ENCODE measurements at regions of chr2 and their contacts with region 1.

Region 1: DNA sequence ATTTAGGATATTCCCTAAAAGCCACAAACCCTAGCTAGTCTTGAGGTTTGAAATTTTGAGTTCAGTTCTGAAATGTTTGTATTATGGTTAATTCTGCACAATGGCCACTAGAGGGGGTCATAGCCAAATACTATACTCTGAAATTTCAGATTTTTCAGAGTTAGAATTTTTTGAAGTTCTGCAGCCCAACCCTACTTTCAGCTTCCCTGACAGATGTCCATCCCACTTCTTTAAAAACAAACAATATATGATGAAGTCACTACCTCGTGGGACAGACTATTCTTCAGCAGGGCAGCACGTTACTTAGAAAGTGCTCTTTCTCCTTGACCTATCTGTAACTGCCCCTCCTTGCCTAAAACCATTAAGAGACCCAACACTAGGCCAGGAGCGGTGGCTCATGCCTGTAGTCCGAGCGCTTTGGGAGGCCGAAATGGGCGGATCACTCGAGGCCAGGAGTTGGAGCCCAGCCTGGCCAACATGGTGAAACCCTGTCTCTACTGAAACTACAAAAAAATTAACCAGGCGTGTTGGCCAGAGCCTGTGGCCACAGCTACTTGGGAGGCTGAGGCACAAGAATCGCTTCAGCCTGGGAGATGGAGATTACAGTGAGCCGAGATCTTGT is 48.2 kb upstream of the PAPOLG start:
- DNase-seq: peak in 1 of 2 experiments; percentile 57
- H3K4me3 ChIP-seq: no peak overlapping the region
- H3K27ac ChIP-seq: no peak overlapping the region
- H3K4me1 ChIP-seq: no peaks in the 10 kb centered on the region
- H3K27me3 ChIP-seq: no peaks in the 10 kb centered on the region
- CTCF ChIP-seq: peak in 2 of 3 experiments; percentile 34 to 51; a peak in 2 of 4 replicates
- EP300 ChIP-seq: no peak
- POLR2A ChIP-seq: no peak
- RAD21 ChIP-seq: peak; percentile 65 to 70

Region 2: DNA sequence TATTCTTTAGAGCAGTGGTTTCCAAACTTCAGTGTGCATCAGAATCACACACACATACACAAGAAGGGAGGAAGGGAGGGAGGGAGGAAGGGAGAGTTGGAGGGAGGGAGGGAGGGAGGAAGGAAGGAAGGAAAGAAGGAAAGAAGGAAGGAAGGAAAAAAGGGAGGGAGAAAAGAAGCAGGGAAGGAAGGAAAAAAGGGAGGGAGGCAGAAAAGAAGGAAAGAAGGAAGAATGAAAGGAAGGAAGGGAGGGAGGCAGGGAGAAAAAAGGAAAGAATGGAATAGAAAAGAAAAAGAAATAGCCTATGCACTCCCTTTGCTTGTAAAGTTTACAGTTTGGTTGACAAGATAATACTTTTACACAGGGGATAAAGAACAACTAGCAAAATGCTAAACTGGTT is 58.1 kb before region 1 on chr2:
- CTCF ChIA-PET with region 1: no interaction called
- POLR2A ChIA-PET with region 1: no interaction called
- DNase-seq: no peak
- H3K4me3 ChIP-seq: no peak overlapping the region
- H3K27ac ChIP-seq: no peak overlapping the region
- H3K4me1 ChIP-seq: no peaks in the 10 kb centered on the region
- H3K27me3 ChIP-seq: no peaks in the 10 kb centered on the region; a peak in 1 of 7 replicates
- CTCF ChIP-seq: no peak
- EP300 ChIP-seq: no peak
- POLR2A ChIP-seq: no peak
- RAD21 ChIP-seq: no peak

Region 3: GRCh38 chr2:60693551-60693950 is 14.3 kb before region 1 on chr2:
- CTCF ChIA-PET with region 1: interaction called, 11 read pairs
- POLR2A ChIA-PET with region 1: no interaction called
- DNase-seq: no peak
- H3K4me3 ChIP-seq: no peak overlapping the region
- H3K27ac ChIP-seq: no peak overlapping the region
- H3K4me1 ChIP-seq: no peaks in the 10 kb centered on the region
- H3K27me3 ChIP-seq: no peaks in the 10 kb centered on the region
- CTCF ChIP-seq: no peak
- EP300 ChIP-seq: no peak
- POLR2A ChIP-seq: no peak
- RAD21 ChIP-seq: no peak

Region 4: DNA sequence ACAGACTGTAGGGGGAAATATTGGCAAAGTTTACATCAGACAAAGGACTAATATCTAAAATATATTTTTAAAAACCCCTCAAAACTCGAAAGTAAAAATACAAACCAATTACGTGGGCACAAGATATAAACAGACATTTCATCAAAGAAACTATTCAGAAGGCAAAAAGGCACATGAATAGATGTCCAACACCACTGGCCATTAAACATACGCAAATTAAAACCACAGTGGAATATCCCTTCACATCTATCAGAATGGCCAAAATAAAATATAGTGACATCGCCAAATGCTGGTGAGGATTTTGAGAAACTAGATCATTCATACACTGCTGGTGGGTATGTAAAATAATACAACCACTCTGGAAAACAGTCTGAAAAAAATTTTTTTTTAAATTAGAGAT is 17.6 kb after region 1 on chr2:
- CTCF ChIA-PET with region 1: interaction called, 12 read pairs
- POLR2A ChIA-PET with region 1: no interaction called
- DNase-seq: no peak
- H3K4me3 ChIP-seq: no peak overlapping the region
- H3K27ac ChIP-seq: no peak overlapping the region
- H3K4me1 ChIP-seq: no peaks in the 10 kb centered on the region
- H3K27me3 ChIP-seq: no peaks in the 10 kb centered on the region
- CTCF ChIP-seq: no peak
- EP300 ChIP-seq: no peak
- POLR2A ChIP-seq: no peak
- RAD21 ChIP-seq: no peak

Region 5: DNA sequence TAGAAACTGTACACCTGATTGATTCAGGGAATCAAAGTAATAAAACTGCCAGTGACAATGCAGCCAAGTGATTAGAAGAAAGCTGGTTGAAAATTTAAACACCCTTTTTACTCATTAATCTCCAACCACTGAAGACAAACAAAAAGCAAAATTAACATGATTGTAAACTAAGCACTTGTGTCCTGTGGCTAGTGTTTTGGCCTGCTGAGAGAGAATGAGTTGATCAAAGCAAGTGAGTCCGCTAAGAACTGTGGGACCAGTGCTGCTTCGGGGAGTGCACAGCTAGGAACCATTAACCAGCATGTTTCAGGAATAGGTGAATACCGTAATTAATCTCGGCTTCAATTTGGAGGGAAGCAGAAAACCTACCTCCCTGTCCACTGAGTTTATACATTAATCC is 34.6 kb after region 1 on chr2:
- CTCF ChIA-PET with region 1: interaction called, 10 read pairs
- POLR2A ChIA-PET with region 1: no interaction called
- DNase-seq: no peak
- H3K4me3 ChIP-seq: no peak overlapping the region
- H3K27ac ChIP-seq: no peak overlapping the region
- H3K4me1 ChIP-seq: peaks cover 0 to 6% (median 5%) of the 10 kb centered on the region in 4 experiments; a peak in 3 of 7 replicates
- H3K27me3 ChIP-seq: peaks cover 2 to 34% (median 23%) of the 10 kb centered on the region in 4 experiments; a peak in 6 of 7 replicates
- CTCF ChIP-seq: no peak
- EP300 ChIP-seq: no peak
- POLR2A ChIP-seq: no peak
- RAD21 ChIP-seq: no peak

Region 6: DNA sequence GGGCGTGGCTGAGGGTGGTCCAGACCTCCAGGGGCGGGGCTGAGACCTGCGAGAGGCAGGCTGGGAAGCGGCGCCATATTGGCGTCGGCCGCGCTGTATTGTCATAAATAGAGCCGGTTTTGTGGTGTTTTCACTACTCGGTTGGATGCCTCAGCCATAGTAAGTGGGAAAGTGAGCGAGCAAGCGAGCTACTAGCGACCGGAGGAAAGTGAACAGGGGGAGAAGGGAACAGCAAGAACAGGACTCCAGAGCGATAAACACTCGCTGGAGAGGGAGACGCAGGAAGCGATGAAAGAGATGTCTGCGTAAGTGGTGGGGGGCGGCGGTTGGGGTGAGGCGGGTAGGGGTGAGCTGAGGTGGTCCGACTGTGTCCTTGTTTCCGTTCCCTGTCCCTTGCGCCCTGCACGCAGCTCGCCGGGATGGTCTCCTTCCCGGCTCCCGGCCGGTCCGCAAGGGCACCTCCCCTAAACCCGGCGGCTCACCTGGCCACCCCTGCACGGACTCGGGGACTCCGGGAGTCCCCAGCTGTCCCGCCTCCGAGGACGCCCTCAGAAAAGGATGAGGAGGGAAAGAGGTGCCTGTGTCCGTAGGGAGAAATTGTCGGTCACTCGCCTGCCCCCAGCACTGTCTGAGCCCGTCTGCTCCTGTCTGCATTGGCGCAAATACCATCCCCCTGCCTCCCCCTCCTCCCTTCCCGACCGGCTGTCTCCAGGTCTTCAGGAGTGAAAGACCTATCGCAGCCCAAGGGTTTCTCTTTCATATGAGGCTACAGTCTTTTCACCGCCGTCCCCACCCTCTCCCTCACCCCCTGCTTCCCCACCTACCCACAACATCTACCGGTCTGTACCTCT is 48.6 kb after region 1 on chr2 and contains the start of gene PAPOLG:
- CTCF ChIA-PET with region 1: interaction called, 12 read pairs
- POLR2A ChIA-PET with region 1: interaction called, 3 read pairs
- DNase-seq: peak; percentile 75 to 97
- H3K4me3 ChIP-seq: peak within 1 kb of the TSS; percentile 72 to 97 (median 96)
- H3K27ac ChIP-seq: peak within 1 kb of the TSS; percentile 89
- H3K4me1 ChIP-seq: peaks cover 0 to 2% (median 0%) of the 10 kb centered on the region in 4 experiments; a peak in 2 of 7 replicates
- H3K27me3 ChIP-seq: no peaks in the 10 kb centered on the region
- CTCF ChIP-seq: no peak
- EP300 ChIP-seq: no peak
- POLR2A ChIP-seq: peak; percentile 83 to 94
- RAD21 ChIP-seq: no peak
- total RNA-seq, gene PAPOLG: 21.5 and 25.5 TPM in 2 replicates

Region 7: GRCh38 chr2:60779426-60779825 is 71.6 kb after region 1 on chr2:
- CTCF ChIA-PET with region 1: interaction called, 10 read pairs
- POLR2A ChIA-PET with region 1: no interaction called
- DNase-seq: no peak
- H3K4me3 ChIP-seq: no peak overlapping the region
- H3K27ac ChIP-seq: no peak overlapping the region
- H3K4me1 ChIP-seq: no peaks in the 10 kb centered on the region
- H3K27me3 ChIP-seq: no peaks in the 10 kb centered on the region
- CTCF ChIP-seq: no peak
- EP300 ChIP-seq: no peak
- POLR2A ChIP-seq: no peak
- RAD21 ChIP-seq: no peak

Region 8: DNA sequence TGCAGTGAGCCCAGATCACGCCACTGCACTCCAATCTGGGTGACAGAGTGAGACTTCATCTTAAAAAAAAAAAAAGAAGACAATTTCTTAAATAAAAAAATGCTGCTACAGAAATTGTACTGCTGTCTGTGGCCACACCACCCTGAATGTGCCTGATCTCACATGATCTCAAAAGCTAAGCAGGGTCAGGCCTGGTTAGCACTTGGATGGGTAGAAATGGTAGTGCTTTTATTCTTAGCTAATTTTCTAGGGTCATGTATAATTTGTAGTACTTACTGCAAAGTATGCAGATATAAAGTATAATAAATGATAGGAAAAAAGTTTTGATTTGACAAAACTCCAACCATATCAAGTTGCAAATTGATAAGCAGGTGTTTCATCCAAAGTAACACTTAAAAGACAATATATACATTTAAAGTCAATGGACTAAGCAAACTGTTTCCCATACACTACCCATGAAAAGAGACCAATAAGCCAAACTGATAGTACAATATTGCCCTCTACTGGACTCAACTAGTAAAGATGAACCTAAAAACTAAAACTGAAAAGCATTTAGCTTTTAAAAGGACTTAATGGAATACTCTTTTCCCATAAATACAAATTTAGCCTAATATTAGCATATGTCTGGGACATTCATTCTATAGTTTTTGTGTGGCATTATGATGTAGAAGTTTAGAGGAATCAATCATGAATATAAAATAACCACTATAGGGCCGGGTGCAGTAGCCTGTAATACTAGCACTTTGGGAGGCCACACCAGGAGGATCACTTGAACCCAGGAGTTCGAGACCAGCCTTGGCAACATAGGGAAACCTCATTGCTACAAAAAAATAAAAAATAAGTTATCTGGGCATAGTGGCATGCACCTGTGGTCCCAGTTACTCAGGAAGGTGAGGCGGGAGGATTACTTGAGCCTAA is 291.0 kb after region 1 on chr2:
- CTCF ChIA-PET with region 1: interaction called, 54 read pairs
- POLR2A ChIA-PET with region 1: interaction called, 3 read pairs
- DNase-seq: no peak
- H3K4me3 ChIP-seq: no peak overlapping the region
- H3K27ac ChIP-seq: no peak overlapping the region
- H3K4me1 ChIP-seq: no peaks in the 10 kb centered on the region
- H3K27me3 ChIP-seq: no peaks in the 10 kb centered on the region
- CTCF ChIP-seq: peak in 2 of 3 experiments; percentile 23 to 55; a peak in 2 of 4 replicates
- EP300 ChIP-seq: no peak
- POLR2A ChIP-seq: no peak
- RAD21 ChIP-seq: peak; percentile 73 to 83

Measured in H1 (cell line).